ENCODE measurements at regions of chr9 and their contacts with region 1.

Region 1: DNA sequence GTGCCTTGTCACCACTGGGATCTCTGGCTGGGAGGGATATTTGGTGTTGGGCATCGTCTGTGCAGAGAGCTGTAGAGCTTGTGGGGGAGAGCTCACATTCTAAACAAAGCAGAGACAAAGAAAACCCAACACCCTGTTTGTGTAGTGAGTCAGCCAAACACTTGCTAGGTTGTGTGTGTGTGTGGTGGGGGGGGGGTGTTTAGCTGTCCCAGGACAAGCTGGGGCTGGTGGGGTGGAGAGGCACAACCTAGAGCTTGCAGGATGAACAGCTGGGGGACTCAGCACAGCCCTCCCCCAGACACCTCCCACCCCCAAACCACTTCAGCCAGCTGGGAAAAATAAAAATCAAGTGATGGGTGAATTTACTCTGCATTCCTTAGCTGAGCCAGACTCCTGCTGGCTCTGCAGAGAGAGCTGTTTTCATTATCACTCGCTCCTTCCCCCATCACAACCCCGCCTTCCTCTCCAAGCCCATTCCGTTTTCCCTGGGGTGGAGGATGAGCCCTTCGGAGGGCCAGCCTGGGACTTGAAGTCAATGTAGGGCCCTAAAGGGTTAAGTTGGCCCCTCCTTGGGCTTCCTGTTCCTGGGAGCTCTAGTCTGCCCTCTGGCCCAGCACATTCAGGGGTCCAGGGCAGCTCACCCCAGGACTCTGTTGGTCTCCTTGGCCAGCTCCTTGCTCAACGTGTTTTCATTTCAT is 2.6 kb downstream of the OLFML2A start:
- DNase-seq: peak; percentile 77 to 90
- H3K4me3 ChIP-seq: no peak overlapping the region
- H3K27ac ChIP-seq: no peak overlapping the region
- H3K4me1 ChIP-seq: peaks cover 18% of the 10 kb centered on the region
- H3K27me3 ChIP-seq: 0 out of 2 replicates have a peak, but pooled peaks cover 7% of the 10 kb centered on the region
- CTCF ChIP-seq: no peak

Region 2: DNA sequence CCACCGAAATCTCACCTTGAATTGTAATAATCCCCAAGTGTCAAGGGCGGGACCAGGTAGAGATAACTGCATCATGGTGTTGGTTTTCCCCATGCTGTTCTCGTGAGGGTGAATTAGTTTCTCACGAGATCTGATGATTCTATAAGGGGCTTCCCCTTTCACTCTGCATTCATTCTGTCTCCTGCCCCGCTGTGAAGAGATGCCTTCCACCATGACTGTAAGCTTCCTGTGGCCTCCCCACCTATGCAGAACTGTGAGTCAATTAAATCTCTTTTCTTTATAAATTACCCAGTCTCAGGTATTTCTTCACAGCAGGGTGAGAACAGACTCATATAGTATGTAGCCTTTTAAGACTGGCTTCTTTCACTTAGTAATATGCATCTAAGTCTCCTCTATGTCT is 144.2 kb before region 1 on chr9:
- CTCF ChIA-PET with region 1: no interaction called
- POLR2A ChIA-PET with region 1: no interaction called
- intact Hi-C with region 1: no loop called
- DNase-seq: no peak
- H3K4me3 ChIP-seq: no peak overlapping the region
- H3K27ac ChIP-seq: no peak overlapping the region
- H3K4me1 ChIP-seq: no peaks in the 10 kb centered on the region
- H3K27me3 ChIP-seq: no peaks in the 10 kb centered on the region
- CTCF ChIP-seq: no peak

Region 3: GRCh38 chr9:124818431-124819281 is 39.1 kb after region 1 on chr9:
- CTCF ChIA-PET with region 1: interaction called, 11 read pairs
- POLR2A ChIA-PET with region 1: interaction called, 36 read pairs
- intact Hi-C with region 1: loop called (anchors 1 kb)
- DNase-seq: peak; percentile 95 to 99
- H3K4me3 ChIP-seq: peak overlapping the region; percentile 16; the same call in 1 of the 2 replicates
- H3K27ac ChIP-seq: peak overlapping the region; percentile 79
- H3K4me1 ChIP-seq: peaks cover 31% of the 10 kb centered on the region
- H3K27me3 ChIP-seq: no peaks in the 10 kb centered on the region
- CTCF ChIP-seq: no peak

Region 4: GRCh38 chr9:125146247-125146646 is 366.7 kb after region 1 on chr9:
- CTCF ChIA-PET with region 1: no interaction called
- POLR2A ChIA-PET with region 1: no interaction called
- intact Hi-C with region 1: no loop called
- DNase-seq: no peak
- H3K4me3 ChIP-seq: no peak overlapping the region
- H3K27ac ChIP-seq: no peak overlapping the region
- H3K4me1 ChIP-seq: peaks cover 5% of the 10 kb centered on the region; the same call in 1 of the 2 replicates
- H3K27me3 ChIP-seq: no peaks in the 10 kb centered on the region
- CTCF ChIP-seq: no peak

Region 5: GRCh38 chr9:125161284-125161918 is 381.9 kb after region 1 on chr9:
- CTCF ChIA-PET with region 1: no interaction called
- POLR2A ChIA-PET with region 1: interaction called, 27 read pairs
- intact Hi-C with region 1: no loop called
- DNase-seq: peak; percentile 30 to 63
- H3K4me3 ChIP-seq: no peak overlapping the region
- H3K27ac ChIP-seq: peak overlapping the region; percentile 62
- H3K4me1 ChIP-seq: peaks cover 16% of the 10 kb centered on the region
- H3K27me3 ChIP-seq: no peaks in the 10 kb centered on the region
- CTCF ChIP-seq: no peak

Region 6: GRCh38 chr9:125706661-125707471 is 927.4 kb after region 1 on chr9 and contains the start of gene MAPKAP1:
- CTCF ChIA-PET with region 1: interaction called, 24 read pairs
- POLR2A ChIA-PET with region 1: no interaction called
- intact Hi-C with region 1: no loop called
- DNase-seq: peak; percentile 88 to 97
- H3K4me3 ChIP-seq: peak within 1 kb of the TSS; percentile 95
- H3K27ac ChIP-seq: 0 out of 2 replicates have a peak within 1 kb of the TSS, but pooled peaks have one; percentile 20
- H3K4me1 ChIP-seq: peaks cover 20% of the 10 kb centered on the region; the same call in 1 of the 2 replicates
- H3K27me3 ChIP-seq: no peaks in the 10 kb centered on the region
- CTCF ChIP-seq: no peak
- total RNA-seq, gene MAPKAP1: 112 and 115 TPM in 2 replicates

Measured in PC-9 (cell line).